ENCODE measurements at regions of chr9 and their contacts with region 1.

Region 1: DNA sequence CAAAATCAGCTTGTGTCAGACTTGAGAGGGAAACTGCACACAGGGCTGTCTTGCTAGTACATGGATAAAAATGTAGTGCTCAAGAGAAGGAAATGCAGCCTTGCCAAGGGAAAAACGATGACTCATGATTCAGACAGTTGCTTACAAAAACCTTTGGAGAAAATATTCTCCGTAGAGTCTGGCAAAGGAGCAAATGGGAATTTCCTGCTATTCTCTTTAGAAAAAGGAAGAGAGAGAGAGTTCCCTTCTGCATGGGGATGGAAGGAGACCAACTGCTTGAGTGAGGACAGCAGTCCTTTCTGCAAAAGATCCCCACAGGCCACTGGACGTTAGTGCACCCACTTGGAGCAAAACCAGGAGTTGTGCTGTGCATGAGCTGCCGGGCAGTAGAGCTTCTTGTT is 7.6 kb downstream of the IFNB1 start:
- DNase-seq: peak; percentile 20 to 73
- ATAC-seq: peak; percentile 82 to 97 (median 94)
- H3K4me3 ChIP-seq: peak overlapping the region in 5 of 10 donors; percentile 3 to 21 (median 16)
- H3K27ac ChIP-seq: peak overlapping the region in 5 of 10 donors; percentile 15 to 32 (median 29)
- H3K4me1 ChIP-seq: peaks cover 0 to 18% (median 13%) of the 10 kb centered on the region in 9 donors
- H3K27me3 ChIP-seq: no peaks in the 10 kb centered on the region
- CTCF ChIP-seq: peak in 5 of 9 donors; percentile 27 to 43 (median 33)

Region 2: DNA sequence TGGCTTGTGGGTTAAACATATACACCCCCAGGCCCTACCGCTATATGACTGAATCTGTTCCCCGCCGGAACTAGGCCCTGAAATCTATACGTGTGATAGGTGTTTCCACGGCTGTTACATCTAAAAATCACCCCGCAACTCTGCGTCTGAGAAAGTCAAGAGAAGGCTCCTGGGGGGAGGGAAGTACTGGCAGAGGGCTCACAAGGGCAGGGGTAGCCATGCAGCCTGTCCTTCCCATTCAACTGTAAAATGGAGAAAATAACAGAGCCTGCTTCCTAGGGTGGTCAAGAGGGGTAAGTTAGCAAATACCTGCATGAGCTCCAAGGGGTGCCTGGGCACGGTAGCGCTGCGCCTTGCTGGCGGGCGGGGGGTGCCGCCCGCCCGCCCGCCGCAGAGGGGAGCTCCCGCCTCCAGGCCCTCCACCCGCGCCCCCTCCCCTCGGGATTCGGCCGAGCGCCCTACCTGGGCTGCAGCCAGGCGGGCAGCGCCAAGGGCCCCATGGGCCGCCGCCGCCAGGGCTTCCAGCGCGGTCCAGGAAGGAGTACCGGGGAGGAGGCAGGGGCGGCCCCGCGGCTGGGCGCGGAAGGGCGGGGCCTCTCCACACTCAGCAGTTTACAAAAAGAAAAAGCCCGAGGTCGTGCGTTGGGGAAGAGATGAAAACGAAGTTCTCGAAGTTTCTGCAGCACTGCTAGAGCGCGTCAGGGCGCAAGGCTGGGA is 38.9 kb before region 1 on chr9 and contains the start of gene HACD4:
- intact Hi-C with region 1: loop called in 1 of 10 experiments (anchors 5 kb)
- DNase-seq: peak; percentile 34 to 66
- ATAC-seq: peak; percentile 86 to 96 (median 94)
- H3K4me3 ChIP-seq: peak within 1 kb of the TSS; percentile 4 to 74 (median 57)
- H3K27ac ChIP-seq: peak within 1 kb of the TSS in 9 of 10 donors; percentile 31 to 90 (median 59)
- H3K4me1 ChIP-seq: peaks cover 0 to 40% (median 3%) of the 10 kb centered on the region in 9 donors
- H3K27me3 ChIP-seq: peaks cover 0 to 7% (median 0%) of the 10 kb centered on the region in 7 donors
- CTCF ChIP-seq: no peak
- total RNA-seq, gene HACD4: 0.45 to 1.9 (median 0.63) TPM

Region 3: DNA sequence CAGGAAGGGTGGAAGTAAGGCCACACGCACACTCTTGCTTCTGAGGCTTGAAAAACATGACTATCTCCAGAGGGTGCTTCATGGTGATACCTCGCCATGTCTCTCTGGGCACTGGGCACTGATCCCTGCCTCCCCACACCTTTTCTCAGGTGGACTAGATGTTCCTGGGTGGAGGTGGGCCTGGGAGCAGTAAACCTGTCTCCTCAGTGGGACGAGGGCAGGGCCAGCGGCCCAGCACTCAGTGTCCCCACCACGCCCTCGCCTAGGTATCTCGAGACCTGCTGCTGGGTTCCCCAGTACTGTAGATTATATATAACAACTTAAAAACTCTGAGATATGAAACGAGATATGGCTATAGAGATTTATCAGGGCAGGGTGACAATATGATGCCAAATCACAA is 292.1 kb after region 1 on chr9:
- intact Hi-C with region 1: no loop called
- DNase-seq: no peak
- ATAC-seq: no peak
- H3K4me3 ChIP-seq: no peak overlapping the region
- H3K27ac ChIP-seq: no peak overlapping the region
- H3K4me1 ChIP-seq: peaks cover 0 to 11% (median 0%) of the 10 kb centered on the region in 9 donors
- H3K27me3 ChIP-seq: peaks cover 0 to 37% (median 13%) of the 10 kb centered on the region in 7 donors
- CTCF ChIP-seq: no peak

Measured in heart right ventricle (tissue), 16 donors.